PC-3 (cell line): ENCODE measurements at regions of chr17 and their contacts with region 1.

Region 1: DNA sequence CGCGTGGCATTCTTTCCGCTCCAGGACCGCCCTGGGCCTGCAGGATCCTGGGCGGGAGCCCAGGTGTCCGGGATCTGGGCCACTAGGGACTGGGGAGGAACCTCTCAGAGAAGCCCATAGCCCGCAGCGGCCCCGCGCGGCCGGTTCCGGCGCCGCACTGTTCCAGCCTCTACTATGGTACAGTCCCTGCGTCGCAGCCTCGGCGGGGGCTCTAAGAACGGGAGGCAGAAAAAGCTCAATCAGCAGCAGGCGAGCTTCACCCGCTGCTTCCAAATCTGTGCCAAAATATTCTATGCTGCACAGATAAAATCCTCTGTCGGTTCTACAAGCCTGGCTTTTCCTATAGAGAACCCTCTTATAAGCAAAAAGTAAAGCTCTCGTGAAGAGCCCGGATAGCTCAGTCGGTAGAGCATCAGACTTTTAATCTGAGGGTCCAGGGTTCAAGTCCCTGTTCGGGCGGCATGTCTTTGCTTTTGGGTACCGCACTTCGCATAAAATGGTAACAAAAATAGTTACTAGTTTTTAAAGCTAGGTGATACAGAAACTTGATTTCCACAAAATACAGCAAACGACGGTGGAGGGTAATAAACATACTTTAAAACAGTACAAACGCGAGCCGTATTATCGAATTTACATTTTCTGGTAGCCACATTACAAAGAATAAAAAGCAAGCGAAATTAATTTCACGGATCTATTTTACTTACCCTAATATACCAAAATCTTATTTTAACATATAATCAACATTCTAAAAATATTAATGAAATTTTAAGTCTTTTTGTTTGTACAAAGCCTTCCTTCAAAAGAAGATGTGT is 661 bp upstream of the ALOXE3 start:
- DNase-seq: peak; percentile 77
- ATAC-seq: peak; percentile 39
- H3K4me3 ChIP-seq: peak overlapping the region; percentile 72
- H3K27ac ChIP-seq: peak overlapping the region; percentile 94
- H3K4me1 ChIP-seq: peaks cover 15% of the 10 kb centered on the region; the same call in 1 of the 2 replicates
- H3K27me3 ChIP-seq: no peaks in the 10 kb centered on the region
- CTCF ChIP-seq: peak; percentile 79

Region 2: DNA sequence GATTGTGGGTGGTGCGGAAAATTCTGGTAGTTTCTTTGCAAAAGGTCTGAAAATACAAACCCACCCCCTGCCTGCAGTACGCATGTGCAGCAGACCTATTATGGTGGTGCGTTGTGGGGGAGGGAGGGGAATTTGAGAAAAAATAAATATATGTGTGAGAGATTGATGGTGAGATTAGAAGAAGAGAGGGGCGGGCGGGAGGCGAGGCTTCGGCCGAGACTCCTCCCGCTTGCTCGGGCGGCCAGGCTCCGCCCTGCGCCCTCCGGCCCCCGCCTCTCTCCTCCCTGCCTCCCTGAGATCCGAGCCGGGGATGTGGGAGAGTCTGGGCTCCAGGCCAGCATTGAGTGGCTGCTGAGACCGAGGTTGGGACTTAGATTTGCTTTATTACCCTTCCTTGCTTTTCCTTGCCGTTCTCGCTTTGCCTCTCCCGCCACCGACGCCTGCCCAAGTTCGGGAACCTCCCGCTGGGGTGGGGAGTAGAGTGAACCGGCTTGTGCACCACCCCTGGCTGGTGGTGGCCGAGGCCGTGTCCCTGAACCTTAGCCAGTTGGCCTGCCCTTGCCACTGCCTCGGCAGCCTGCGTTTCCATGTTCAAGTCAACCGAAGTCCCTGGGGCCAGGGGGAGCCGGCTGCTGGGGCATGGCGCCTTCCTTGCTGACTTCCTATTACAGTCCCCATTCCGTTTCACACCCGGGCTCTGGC is 231.3 kb before region 1 on chr17:
- CTCF ChIA-PET with region 1: no interaction called
- POLR2A ChIA-PET with region 1: no interaction called
- intact Hi-C with region 1: loop called (anchors 2 kb)
- DNase-seq: peak; percentile 93
- ATAC-seq: peak; percentile 75
- H3K4me3 ChIP-seq: peak overlapping the region; percentile 94
- H3K27ac ChIP-seq: peak overlapping the region; percentile 96
- H3K4me1 ChIP-seq: peaks cover 29% of the 10 kb centered on the region
- H3K27me3 ChIP-seq: no peaks in the 10 kb centered on the region
- CTCF ChIP-seq: no peak

Region 3: GRCh38 chr17:8156246-8156992 is 37.4 kb after region 1 on chr17:
- CTCF ChIA-PET with region 1: no interaction called
- POLR2A ChIA-PET with region 1: no interaction called
- intact Hi-C with region 1: loop called (anchors 1 kb)
- DNase-seq: peak; percentile 99
- ATAC-seq: peak; percentile 65
- H3K4me3 ChIP-seq: peak overlapping the region; percentile 93
- H3K27ac ChIP-seq: peak overlapping the region; percentile 77
- H3K4me1 ChIP-seq: peaks cover 42% of the 10 kb centered on the region
- H3K27me3 ChIP-seq: no peaks in the 10 kb centered on the region
- CTCF ChIP-seq: no peak

Region 4: DNA sequence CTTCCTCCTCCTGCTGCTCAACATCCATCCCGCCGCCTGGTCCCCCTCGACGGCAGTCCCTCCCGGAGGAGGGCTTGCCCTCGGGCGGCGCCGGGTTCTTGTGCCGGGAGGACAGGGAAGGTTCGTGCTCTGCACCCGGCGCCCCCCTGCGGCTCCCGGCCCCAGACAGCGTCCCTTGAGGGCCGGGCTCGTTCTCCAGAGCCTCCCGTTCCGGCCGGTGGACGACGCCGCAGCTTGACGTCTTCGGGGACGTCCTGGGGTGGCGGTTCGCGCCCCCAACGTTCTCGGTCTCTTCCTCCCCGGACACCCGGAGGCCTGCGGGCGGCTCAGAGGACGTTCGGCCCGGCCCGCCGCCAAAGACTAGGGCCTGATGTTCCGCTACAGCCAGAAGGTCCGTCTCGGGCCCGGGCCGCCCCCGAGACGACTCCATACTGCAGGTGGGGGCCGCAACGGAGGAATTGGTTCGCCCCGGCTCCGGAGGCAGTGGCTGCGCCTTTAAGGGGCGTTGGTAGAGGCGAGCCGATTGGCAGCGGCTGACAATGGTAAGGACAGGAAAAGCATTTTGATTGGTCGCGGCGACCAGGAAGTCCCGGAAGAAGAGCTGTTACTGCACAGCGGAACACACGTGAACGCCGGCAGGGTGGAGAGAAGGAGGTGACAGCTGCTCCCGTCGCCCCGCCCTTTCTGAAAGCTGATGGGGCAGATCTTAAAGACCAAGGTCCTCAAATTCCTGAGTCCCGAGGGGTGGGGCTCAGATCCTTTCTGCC is 70.9 kb after region 1 on chr17 and contains the start of gene BORCS6:
- CTCF ChIA-PET with region 1: no interaction called
- POLR2A ChIA-PET with region 1: no interaction called
- intact Hi-C with region 1: loop called (anchors 1 kb)
- DNase-seq: peak; percentile 93
- ATAC-seq: peak; percentile 60
- H3K4me3 ChIP-seq: peak within 1 kb of the TSS; percentile 84
- H3K27ac ChIP-seq: peak within 1 kb of the TSS; percentile 58; the same call in 1 of the 2 replicates
- H3K4me1 ChIP-seq: peaks cover 19% of the 10 kb centered on the region
- H3K27me3 ChIP-seq: no peaks in the 10 kb centered on the region
- CTCF ChIP-seq: peak; percentile 17; the same call in 1 of the 2 replicates
- total RNA-seq, gene BORCS6: 5.9 and 7.3 TPM in 2 replicates

Region 5: GRCh38 chr17:8222630-8223356 is 103.8 kb after region 1 on chr17:
- CTCF ChIA-PET with region 1: no interaction called
- POLR2A ChIA-PET with region 1: no interaction called
- intact Hi-C with region 1: loop called (anchors 1 kb)
- DNase-seq: peak; percentile 88
- ATAC-seq: peak; percentile 44
- H3K4me3 ChIP-seq: peak overlapping the region; percentile 82
- H3K27ac ChIP-seq: peak overlapping the region; percentile 91
- H3K4me1 ChIP-seq: peaks cover 10% of the 10 kb centered on the region
- H3K27me3 ChIP-seq: no peaks in the 10 kb centered on the region
- CTCF ChIP-seq: no peak

Region 6: DNA sequence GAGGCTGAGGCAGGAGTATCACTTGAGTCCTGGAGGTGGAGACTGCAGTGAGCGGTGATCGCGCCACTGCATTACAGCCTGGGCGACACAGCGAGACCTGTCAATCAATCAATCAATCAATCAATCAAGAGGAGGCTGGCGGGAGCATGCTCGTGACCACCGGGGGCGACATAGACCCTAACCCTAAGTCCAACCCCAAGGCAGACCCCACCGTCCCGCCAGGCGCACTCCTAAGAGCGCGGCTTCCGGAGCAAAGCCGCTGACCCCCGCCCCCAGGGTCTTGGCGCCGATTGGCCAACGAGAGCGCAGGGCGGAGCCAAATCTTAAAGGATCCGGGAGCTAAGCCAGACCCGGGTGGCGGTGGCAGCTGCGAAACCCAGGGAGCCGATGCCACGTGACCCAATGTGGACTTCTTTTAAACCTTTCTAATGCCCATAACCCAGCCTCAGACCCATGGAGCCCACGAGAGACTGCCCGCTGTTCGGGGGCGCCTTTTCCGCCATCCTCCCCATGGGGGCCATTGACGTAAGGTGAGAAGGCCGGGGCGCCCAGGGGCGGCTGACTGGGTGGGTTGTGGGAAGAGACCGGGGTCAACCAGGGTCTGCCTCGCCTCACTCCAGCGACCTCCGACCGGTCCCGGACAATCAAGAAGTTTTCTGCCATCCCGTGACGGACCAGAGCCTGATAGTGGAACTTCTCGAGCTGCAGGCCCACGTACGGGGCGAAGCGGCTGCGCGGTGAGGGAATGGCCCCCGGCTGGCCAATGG is 169.5 kb after region 1 on chr17 and contains the start of gene RANGRF:
- CTCF ChIA-PET with region 1: no interaction called
- POLR2A ChIA-PET with region 1: no interaction called
- intact Hi-C with region 1: no loop called
- DNase-seq: peak; percentile 67
- ATAC-seq: peak; percentile 84
- H3K4me3 ChIP-seq: peak within 1 kb of the TSS; percentile 78
- H3K27ac ChIP-seq: no peak within 1 kb of the TSS
- H3K4me1 ChIP-seq: peaks cover 6% of the 10 kb centered on the region
- H3K27me3 ChIP-seq: no peaks in the 10 kb centered on the region
- CTCF ChIP-seq: no peak
- total RNA-seq, gene RANGRF: 18.0 and 22.8 TPM in 2 replicates